ENCODE measurements at regions of chr3 and their contacts with region 1.

Region 1: DNA sequence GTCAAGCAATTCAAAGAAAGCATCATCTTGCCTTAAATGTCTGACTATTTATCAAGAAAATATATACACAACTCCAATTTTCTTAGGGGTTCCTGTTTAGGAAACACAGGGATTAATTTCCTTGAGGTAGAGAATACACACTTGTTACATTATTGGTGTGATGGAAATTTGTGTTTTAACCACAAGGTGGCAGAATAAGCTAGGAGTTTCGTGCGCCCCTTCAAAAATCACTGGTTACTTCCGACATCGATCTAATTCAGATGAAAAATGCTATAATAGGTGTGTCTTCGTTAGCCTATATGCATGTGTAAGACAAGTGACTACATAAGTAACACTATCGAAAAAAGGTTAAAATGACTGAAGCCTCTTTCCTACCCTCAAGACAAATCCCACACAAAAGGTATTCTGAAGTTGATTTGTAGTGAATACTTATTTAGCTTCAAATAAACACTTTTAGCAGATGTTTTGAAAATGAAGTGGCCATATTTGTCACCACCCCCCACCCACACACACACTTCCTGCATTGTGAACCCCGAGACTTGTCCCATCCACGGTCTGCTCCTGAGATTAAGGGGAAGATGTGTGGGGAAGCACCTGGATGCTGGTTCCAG is 246.5 kb downstream of the ROBO1 start:
- DNase-seq: no peak
- ATAC-seq: no peak

Region 2: DNA sequence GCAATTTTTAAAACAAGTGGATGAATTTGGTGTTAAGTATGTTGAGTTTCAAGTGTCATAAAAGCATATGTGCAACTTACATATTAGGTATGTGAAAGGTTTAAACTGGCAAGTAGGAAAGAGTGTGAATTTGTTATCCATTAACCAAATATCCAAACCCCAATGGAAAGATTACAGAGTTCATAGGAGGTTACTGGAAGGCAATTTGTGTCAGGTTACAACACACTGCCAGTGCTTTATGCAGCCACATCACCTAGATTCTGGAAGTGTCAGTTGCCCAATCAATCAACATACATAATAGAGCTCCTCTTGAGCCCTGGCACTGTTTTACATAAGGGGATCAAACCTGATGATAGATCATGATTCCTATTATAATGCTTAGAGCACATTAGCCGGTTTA is 14.6 kb before region 1 on chr3:
- intact Hi-C with region 1: no loop called
- DNase-seq: no peak
- ATAC-seq: no peak

Region 3: DNA sequence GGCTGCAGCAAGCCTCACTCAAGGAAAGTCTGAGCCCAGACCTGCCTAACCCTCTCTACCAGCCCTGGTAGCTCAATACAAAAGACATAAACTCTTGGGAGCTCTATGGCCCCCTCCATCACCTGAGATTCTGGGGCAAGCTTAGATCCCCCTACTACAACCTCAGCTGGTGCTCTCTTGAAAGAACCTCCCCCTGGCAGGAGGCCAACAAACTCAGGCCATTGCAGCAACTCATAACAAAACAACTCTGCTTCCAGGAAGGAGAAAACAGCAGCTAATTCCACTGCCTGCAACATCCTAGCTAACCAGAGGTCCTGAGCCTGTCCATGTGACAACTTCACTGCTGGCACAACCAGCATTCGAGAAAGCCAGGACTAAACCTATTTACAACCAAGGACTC is 77.3 kb after region 1 on chr3:
- intact Hi-C with region 1: no loop called
- DNase-seq: no peak
- ATAC-seq: no peak

Region 4: GRCh38 chr3:80696281-80696680 is 1174.9 kb after region 1 on chr3:
- intact Hi-C with region 1: loop called (anchors 10 kb)
- DNase-seq: no peak
- ATAC-seq: no peak